AG04449 (cell line): ENCODE measurements at regions of chr1 and their contacts with region 1.

Region 1: GRCh38 chr1:223081181-223081994 is 61.7 kb downstream of the TLR5 start:
- DNase-seq: no peak
- H3K4me3 ChIP-seq: peak overlapping the region; percentile 51
- CTCF ChIP-seq: peak; percentile 98

Region 2: GRCh38 chr1:222732216-222733159 is 348.9 kb before region 1 on chr1:
- CTCF ChIA-PET with region 1: interaction called, 16 read pairs
- POLR2A ChIA-PET with region 1: no interaction called
- DNase-seq: no peak
- H3K4me3 ChIP-seq: no peak overlapping the region
- CTCF ChIP-seq: no peak

Region 3: GRCh38 chr1:222739465-222739864 is 341.9 kb before region 1 on chr1:
- CTCF ChIA-PET with region 1: interaction called, 16 read pairs
- POLR2A ChIA-PET with region 1: no interaction called
- DNase-seq: no peak
- H3K4me3 ChIP-seq: no peak overlapping the region
- CTCF ChIP-seq: no peak

Region 4: DNA sequence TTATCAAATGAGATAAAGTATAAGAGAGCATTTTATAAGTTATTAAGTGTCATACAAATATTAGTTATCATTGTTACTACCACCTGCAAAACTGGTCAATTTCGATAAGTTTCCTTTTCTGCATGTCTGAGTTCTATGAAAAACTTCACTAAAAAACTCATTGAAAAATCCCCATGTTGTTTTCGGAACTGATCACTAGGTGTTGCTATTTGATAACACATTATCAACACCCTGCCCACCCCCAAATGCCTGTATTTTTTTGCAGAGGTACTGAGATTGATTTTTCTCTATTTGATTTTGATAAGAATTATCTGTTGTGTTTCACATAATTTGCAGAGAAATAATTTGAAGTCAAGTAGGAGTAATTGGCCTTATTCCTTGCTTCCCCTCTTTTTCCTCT is 288.6 kb before region 1 on chr1:
- CTCF ChIA-PET with region 1: interaction called, 115 read pairs
- POLR2A ChIA-PET with region 1: no interaction called
- DNase-seq: no peak
- H3K4me3 ChIP-seq: no peak overlapping the region
- CTCF ChIP-seq: peak; percentile 20

Region 5: DNA sequence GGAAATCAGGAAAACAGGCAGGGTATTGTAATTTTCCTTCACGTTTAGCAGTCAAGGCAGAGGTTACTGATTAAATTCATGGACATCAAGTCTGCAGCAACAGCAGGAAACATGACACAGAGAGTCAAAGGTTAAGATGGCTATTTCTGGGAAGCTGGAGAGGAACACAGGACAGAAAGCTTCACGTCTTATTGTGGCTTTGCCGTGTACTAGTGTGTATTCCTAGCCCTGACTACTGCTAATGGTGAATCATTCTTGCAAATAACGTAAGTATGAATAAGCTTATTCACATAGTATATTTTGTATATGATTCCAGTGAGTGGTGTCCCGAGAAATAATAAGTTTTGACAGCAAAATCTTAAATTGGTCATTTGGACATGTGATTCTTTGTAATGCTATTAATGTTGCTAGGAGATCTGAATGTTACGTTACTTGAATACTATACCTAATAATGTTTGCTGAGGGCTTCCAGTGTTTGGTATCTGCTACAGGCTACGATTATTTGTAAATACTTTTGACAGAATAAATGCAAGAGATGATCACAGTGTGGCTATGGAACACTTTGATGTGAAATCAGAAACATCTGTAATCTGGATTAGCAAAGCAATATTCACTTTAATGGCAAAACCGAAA is 189.1 kb before region 1 on chr1:
- CTCF ChIA-PET with region 1: no interaction called
- POLR2A ChIA-PET with region 1: no interaction called
- DNase-seq: no peak
- H3K4me3 ChIP-seq: no peak overlapping the region
- CTCF ChIP-seq: no peak

Region 6: DNA sequence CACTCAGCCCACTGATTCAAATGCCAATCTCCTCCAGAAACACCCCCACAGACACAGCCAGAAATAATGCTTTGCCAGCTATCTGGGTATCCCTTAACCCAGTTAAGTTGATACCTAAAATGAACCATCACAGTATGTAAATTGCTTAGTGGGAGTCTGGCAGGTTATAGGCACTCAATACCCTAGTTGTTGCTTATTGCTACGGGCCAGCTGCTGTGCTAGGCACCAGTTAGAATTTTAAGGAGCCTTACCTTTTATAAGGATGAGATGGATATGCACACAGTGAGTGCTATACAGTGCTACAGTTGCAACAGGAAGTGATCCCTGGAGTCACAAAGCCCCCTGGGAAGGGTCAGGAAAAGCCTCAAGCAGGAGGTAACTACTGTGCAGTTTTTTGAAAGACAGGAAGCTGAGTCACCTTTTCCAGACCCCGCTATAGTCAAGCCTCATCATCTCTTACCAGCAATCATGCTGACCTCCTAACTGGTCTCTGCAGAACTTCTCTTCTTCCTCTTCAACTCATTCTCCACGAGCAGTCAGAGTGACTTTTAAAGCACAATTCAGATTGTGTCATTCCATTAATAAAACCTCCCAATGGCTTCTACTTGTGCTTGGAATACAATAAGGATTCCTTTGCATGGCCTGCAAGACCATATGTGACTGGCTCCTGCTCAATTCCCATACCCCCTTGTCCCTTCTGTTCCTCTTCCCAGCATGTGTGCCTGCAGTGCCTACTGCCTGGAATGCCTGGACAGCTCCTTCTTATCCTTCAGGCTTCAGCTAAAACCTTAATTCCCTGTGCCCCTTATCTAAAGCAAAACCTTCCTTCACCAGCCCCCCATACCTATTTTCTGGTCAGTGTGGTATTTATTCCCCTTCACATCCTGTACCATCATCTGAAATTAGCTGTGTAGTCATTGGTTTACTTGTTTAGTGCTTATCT is 72.1 kb after region 1 on chr1:
- CTCF ChIA-PET with region 1: no interaction called
- POLR2A ChIA-PET with region 1: no interaction called
- DNase-seq: no peak
- H3K4me3 ChIP-seq: no peak overlapping the region
- CTCF ChIP-seq: no peak

Region 7: GRCh38 chr1:223216531-223217205 is 135.3 kb after region 1 on chr1:
- CTCF ChIA-PET with region 1: no interaction called
- POLR2A ChIA-PET with region 1: no interaction called
- DNase-seq: no peak
- H3K4me3 ChIP-seq: no peak overlapping the region
- CTCF ChIP-seq: no peak